CD4-positive, alpha-beta T cell (primary cell): ENCODE measurements at regions of chr1 and their contacts with region 1.

Region 1: DNA sequence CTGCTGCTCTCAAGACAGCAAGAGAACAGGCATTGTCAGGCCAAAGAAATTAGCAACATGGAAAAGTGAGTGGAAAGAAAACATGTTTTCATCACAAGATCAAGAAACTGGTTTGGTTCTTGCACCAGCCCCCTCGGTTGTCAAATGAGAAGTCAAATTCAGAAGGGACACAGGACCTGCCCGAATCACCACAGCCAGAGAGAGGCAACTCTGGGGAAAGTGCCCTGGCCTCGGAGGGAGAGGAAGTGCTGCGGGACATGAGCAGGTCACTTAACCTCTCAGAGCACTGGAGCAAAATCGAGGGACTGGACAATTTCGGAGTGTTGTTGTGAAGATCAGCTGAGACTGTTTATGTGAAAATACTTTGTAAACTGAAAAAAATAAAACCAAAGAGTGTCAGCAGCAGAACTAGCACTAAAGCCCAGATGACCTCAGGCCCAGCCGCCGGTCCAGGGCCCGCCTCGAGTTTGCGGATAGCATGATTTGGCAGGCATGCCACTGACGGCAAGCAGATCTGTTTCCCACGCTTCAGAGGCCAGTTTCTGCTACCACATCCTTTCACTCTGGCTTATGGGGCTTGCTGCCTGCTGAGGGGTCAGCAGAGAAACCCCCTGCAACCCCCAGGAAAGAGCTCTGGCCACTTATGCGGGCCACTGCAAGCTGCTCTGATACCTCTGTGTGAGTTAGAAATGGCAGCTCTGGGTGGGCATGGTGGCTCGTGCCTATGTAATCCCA is 32.1 kb downstream of the CD247 start:
- DNase-seq: peak in 3 of 14 experiments; percentile 40 to 51 (median 46)
- ATAC-seq: no peak
- H3K4me3 ChIP-seq: peak overlapping the region; percentile 22
- H3K4me3 Mint-ChIP-seq: peak overlapping the region; percentile 80
- H3K27ac ChIP-seq: peak overlapping the region; percentile 78 to 80
- H3K27ac Mint-ChIP-seq: peak overlapping the region; percentile 100
- H3K4me1 ChIP-seq: peaks cover 98% of the 10 kb centered on the region
- H3K4me1 Mint-ChIP-seq: peaks cover 100% of the 10 kb centered on the region
- H3K27me3 ChIP-seq: no peaks in the 10 kb centered on the region
- H3K27me3 Mint-ChIP-seq: no peaks in the 10 kb centered on the region
- CTCF ChIP-seq: no peak

Region 2: GRCh38 chr1:166910396-166910994 is 575.8 kb before region 1 on chr1:
- CTCF ChIA-PET with region 1: no interaction called
- POLR2A ChIA-PET with region 1: no interaction called
- intact Hi-C with region 1: no loop called
- DNase-seq: peak; percentile 54 to 92 (median 68)
- ATAC-seq: peak; percentile 100
- H3K4me3 ChIP-seq: no peak overlapping the region
- H3K4me3 Mint-ChIP-seq: no peak overlapping the region
- H3K27ac ChIP-seq: no peak overlapping the region
- H3K27ac Mint-ChIP-seq: no peak overlapping the region
- H3K4me1 ChIP-seq: peaks cover 3% of the 10 kb centered on the region
- H3K4me1 Mint-ChIP-seq: no peaks in the 10 kb centered on the region
- H3K27me3 ChIP-seq: no peaks in the 10 kb centered on the region
- H3K27me3 Mint-ChIP-seq: no peaks in the 10 kb centered on the region
- CTCF ChIP-seq: peak; percentile 81

Region 3: GRCh38 chr1:167467126-167467710 is 19.0 kb before region 1 on chr1:
- CTCF ChIA-PET with region 1: no interaction called
- POLR2A ChIA-PET with region 1: interaction called, 60 read pairs
- intact Hi-C with region 1: loop called in 1 of 2 experiments (anchors 2 kb)
- DNase-seq: peak in 2 of 14 experiments; percentile 34
- ATAC-seq: peak; percentile 55
- H3K4me3 ChIP-seq: no peak overlapping the region
- H3K4me3 Mint-ChIP-seq: peak overlapping the region; percentile 44
- H3K27ac ChIP-seq: peak overlapping the region; percentile 3 to 46
- H3K27ac Mint-ChIP-seq: peak overlapping the region; percentile 100
- H3K4me1 ChIP-seq: peaks cover 66% of the 10 kb centered on the region
- H3K4me1 Mint-ChIP-seq: peaks cover 93% of the 10 kb centered on the region
- H3K27me3 ChIP-seq: no peaks in the 10 kb centered on the region
- H3K27me3 Mint-ChIP-seq: no peaks in the 10 kb centered on the region
- CTCF ChIP-seq: no peak

Region 4: GRCh38 chr1:167499664-167500101 is 13.4 kb after region 1 on chr1:
- CTCF ChIA-PET with region 1: interaction called, 4 read pairs
- POLR2A ChIA-PET with region 1: interaction called, 10 read pairs
- intact Hi-C with region 1: loop called in 1 of 2 experiments (anchors 1 kb)
- DNase-seq: peak in 4 of 14 experiments; percentile 34 to 70 (median 52)
- ATAC-seq: peak; percentile 68
- H3K4me3 ChIP-seq: no peak overlapping the region
- H3K4me3 Mint-ChIP-seq: peak overlapping the region; percentile 47
- H3K27ac ChIP-seq: peak overlapping the region; percentile 26 to 29
- H3K27ac Mint-ChIP-seq: peak overlapping the region; percentile 100
- H3K4me1 ChIP-seq: peaks cover 96% of the 10 kb centered on the region
- H3K4me1 Mint-ChIP-seq: peaks cover 99% of the 10 kb centered on the region
- H3K27me3 ChIP-seq: no peaks in the 10 kb centered on the region
- H3K27me3 Mint-ChIP-seq: no peaks in the 10 kb centered on the region
- CTCF ChIP-seq: no peak

Region 5: GRCh38 chr1:167510244-167510643 is 24.0 kb after region 1 on chr1:
- CTCF ChIA-PET with region 1: interaction called, 32 read pairs
- POLR2A ChIA-PET with region 1: interaction called, 203 read pairs
- intact Hi-C with region 1: loop called (anchors 2 to 5 kb)
- DNase-seq: peak in 2 of 14 experiments; percentile 45 to 48
- ATAC-seq: peak; percentile 27
- H3K4me3 ChIP-seq: peak overlapping the region; percentile 89
- H3K4me3 Mint-ChIP-seq: peak overlapping the region; percentile 87
- H3K27ac ChIP-seq: peak overlapping the region; percentile 27 to 72
- H3K27ac Mint-ChIP-seq: peak overlapping the region; percentile 100
- H3K4me1 ChIP-seq: peaks cover 85% of the 10 kb centered on the region
- H3K4me1 Mint-ChIP-seq: peaks cover 89% of the 10 kb centered on the region
- H3K27me3 ChIP-seq: no peaks in the 10 kb centered on the region
- H3K27me3 Mint-ChIP-seq: no peaks in the 10 kb centered on the region
- CTCF ChIP-seq: no peak